ENCODE measurements at regions of chr4 and their contacts with region 1.

Region 1: GRCh38 chr4:118981839-118982381 is 93.3 kb downstream of the SYNPO2 start:
- DNase-seq: peak; percentile 64
- ATAC-seq: peak; percentile 70
- H3K4me3 Mint-ChIP-seq: no peak overlapping the region
- H3K27ac Mint-ChIP-seq: no peak overlapping the region
- H3K4me1 Mint-ChIP-seq: no peaks in the 10 kb centered on the region
- H3K27me3 Mint-ChIP-seq: peaks cover 3% of the 10 kb centered on the region
- CTCF ChIP-seq: peak; percentile 80

Region 2: DNA sequence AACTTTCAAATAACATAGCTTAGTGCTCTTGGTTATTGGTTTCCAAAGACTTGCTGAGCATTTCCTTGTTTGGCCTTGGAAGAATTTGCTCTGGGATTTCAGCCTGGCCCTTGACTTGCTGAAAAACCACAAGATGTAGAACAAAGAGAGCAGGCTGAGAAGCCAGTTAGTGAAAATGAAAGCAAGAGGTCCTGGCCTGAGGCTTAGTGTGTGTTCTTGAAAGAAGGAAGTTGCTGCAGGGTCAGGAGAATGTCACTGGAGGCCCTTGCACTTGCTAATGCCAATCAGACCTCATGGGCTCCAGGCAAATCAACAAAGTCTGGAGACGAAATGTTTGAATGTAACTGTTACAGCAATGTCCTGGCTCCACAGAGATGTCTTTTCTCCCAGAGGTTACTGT is 13.9 kb before region 1 on chr4:
- CTCF ChIA-PET with region 1: interaction called, 12 read pairs
- POLR2A ChIA-PET with region 1: no interaction called
- intact Hi-C with region 1: no loop called
- DNase-seq: peak; percentile 12
- ATAC-seq: peak; percentile 79
- H3K4me3 Mint-ChIP-seq: no peak overlapping the region
- H3K27ac Mint-ChIP-seq: peak overlapping the region; percentile 36
- H3K4me1 Mint-ChIP-seq: peaks cover 6% of the 10 kb centered on the region
- H3K27me3 Mint-ChIP-seq: no peaks in the 10 kb centered on the region
- CTCF ChIP-seq: no peak

Region 3: GRCh38 chr4:119041951-119042560 is 60.1 kb after region 1 on chr4:
- CTCF ChIA-PET with region 1: interaction called, 23 read pairs
- POLR2A ChIA-PET with region 1: no interaction called
- intact Hi-C with region 1: loop called (anchors 5 kb)
- DNase-seq: peak; percentile 71
- ATAC-seq: peak; percentile 91
- H3K4me3 Mint-ChIP-seq: no peak overlapping the region
- H3K27ac Mint-ChIP-seq: no peak overlapping the region
- H3K4me1 Mint-ChIP-seq: peaks cover 13% of the 10 kb centered on the region
- H3K27me3 Mint-ChIP-seq: no peaks in the 10 kb centered on the region
- CTCF ChIP-seq: peak; percentile 82

Region 4: DNA sequence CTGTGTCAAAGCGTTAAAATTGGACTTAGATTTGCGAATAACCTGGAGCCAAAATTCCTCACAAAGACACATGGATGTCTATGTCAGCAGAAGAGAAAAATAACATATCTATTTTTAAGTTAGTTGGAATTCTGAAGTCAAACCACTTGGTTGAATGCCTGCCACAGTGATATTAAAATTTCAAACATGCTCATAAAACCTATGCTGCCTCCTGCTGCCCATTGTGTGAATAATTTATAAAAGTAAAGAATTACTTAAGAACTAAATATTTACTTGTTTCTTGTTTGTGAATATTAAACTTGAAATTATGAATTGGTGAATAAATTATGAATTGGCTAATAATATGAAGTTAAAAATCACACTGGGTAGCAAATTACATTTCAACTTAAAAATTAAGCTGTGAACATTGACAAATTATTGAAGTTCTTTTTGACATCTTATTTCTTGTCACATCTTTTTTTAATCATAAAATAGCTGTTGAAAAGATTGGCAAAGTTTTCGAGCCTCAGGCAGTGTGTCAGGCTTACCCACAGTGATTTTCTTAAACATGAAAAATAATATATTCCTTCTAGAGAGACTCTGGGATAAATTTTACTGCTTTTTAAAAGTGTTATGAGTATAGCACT is 304.6 kb after region 1 on chr4:
- CTCF ChIA-PET with region 1: interaction called, 3 read pairs
- POLR2A ChIA-PET with region 1: no interaction called
- intact Hi-C with region 1: loop called (anchors 1 kb)
- DNase-seq: peak; percentile 43
- ATAC-seq: peak; percentile 39
- H3K4me3 Mint-ChIP-seq: no peak overlapping the region
- H3K27ac Mint-ChIP-seq: no peak overlapping the region
- H3K4me1 Mint-ChIP-seq: peaks cover 19% of the 10 kb centered on the region
- H3K27me3 Mint-ChIP-seq: no peaks in the 10 kb centered on the region
- CTCF ChIP-seq: peak; percentile 74

Region 5: GRCh38 chr4:119300101-119300978 is 318.4 kb after region 1 on chr4:
- CTCF ChIA-PET with region 1: interaction called, 10 read pairs
- POLR2A ChIA-PET with region 1: no interaction called
- intact Hi-C with region 1: no loop called
- DNase-seq: peak; percentile 96
- ATAC-seq: peak; percentile 99
- H3K4me3 Mint-ChIP-seq: peak overlapping the region; percentile 92
- H3K27ac Mint-ChIP-seq: peak overlapping the region; percentile 98
- H3K4me1 Mint-ChIP-seq: peaks cover 25% of the 10 kb centered on the region
- H3K27me3 Mint-ChIP-seq: peaks cover 3% of the 10 kb centered on the region
- CTCF ChIP-seq: no peak

Region 6: GRCh38 chr4:119628308-119629141 is 646.6 kb after region 1 on chr4 and contains the start of gene PDE5A:
- CTCF ChIA-PET with region 1: interaction called, 11 read pairs
- POLR2A ChIA-PET with region 1: no interaction called
- intact Hi-C with region 1: loop called (anchors 5 kb)
- DNase-seq: peak; percentile 83
- ATAC-seq: peak; percentile 87
- H3K4me3 Mint-ChIP-seq: peak within 1 kb of the TSS; percentile 71
- H3K27ac Mint-ChIP-seq: no peak within 1 kb of the TSS
- H3K4me1 Mint-ChIP-seq: peaks cover 19% of the 10 kb centered on the region
- H3K27me3 Mint-ChIP-seq: peaks cover 23% of the 10 kb centered on the region
- CTCF ChIP-seq: peak; percentile 82
- total RNA-seq, gene PDE5A: 0.22 to 0.32 TPM

Region 7: DNA sequence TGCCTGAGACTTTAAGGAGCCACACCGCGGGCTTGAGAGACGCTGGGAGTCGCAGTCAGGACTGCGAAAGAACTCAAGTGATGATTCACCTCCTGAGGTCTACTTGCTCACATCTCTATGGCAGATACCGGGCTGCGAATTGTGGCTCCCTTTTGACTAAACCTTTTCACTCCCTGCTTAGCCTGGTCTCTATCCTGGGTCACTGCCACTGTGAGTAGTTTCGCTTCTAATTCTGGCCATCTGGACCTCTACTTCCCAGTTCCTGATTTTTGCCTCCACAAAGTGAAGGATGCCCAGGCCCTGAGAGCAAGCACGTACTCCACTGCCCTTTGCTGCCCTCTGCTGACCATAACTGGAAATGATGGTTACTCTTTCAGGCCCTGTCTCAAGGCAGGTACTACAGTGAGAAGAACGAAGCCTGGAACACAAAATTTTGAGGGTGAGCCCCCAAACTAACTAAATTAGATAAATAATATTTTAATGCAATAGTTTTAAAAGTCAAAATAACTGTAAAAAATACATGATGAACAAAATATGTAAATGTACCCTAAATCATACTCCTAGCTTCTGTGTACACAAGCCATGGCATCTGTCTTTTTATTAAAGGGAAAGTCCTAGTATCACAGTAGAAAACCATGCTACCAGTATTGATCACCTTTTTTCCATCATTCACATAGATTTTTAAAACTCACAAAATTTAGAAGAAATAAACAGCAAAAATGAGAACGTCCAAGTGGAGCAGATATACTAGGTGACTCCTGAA is 1068.0 kb after region 1 on chr4:
- CTCF ChIA-PET with region 1: no interaction called
- POLR2A ChIA-PET with region 1: no interaction called
- intact Hi-C with region 1: loop called (anchors 5 kb)
- DNase-seq: peak; percentile 81
- ATAC-seq: peak; percentile 93
- H3K4me3 Mint-ChIP-seq: no peak overlapping the region
- H3K27ac Mint-ChIP-seq: peak overlapping the region; percentile 70
- H3K4me1 Mint-ChIP-seq: peaks cover 5% of the 10 kb centered on the region
- H3K27me3 Mint-ChIP-seq: no peaks in the 10 kb centered on the region
- CTCF ChIP-seq: peak; percentile 61